B cell (primary cell): ENCODE measurements at regions of chr7 and their contacts with region 1.

Region 1: DNA sequence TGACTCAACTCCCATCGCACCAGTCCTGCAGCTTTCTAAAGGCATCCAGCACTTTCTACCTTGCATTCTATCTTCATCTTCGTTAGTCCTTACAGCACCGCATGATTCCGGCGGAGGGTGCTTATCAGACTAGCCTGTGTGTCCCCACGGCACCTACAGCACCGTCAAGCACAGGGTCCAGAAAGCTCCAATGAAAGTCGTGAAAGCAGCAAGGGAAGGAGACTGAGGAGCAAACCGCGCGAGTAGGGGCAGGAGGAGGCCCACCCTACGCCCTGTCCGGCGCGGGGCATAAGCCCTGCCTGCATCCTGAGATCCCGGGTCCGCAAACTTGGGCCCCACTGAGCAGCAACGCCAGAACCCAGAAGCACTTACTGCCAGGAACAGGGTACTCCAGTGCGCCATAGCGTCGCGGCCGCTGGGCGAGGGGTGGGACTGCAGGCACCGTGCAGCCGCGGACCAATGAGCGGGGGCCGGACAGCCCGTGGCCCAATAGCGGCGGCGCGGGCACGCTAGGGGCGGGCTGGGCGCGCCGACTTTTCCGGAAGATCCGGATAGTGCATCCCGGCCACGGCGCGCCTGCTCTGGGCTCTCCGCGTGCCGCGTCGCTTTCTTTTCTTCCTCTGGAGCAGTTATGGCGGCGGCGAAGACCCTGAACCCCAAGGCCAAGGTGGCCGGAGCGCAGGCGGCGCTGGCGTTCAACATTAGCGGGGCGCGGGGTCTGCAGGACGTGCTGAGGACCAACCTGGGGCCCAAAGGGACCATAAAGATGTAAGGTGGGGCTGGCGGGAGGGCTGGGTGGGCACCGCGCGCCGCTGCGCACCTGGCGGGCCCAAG is 122.1 kb upstream of the VKORC1L1 start:
- DNase-seq: peak; percentile 89
- ATAC-seq: peak; percentile 99
- H3K4me3 ChIP-seq: peak overlapping the region; percentile 43 to 88 (median 75)
- H3K4me3 Mint-ChIP-seq: peak overlapping the region; percentile 97
- H3K27ac ChIP-seq: peak overlapping the region; percentile 41 to 69
- H3K27ac Mint-ChIP-seq: peak overlapping the region; percentile 86
- H3K4me1 ChIP-seq: peaks cover 3 to 15% of the 10 kb centered on the region in 2 donors
- H3K4me1 Mint-ChIP-seq: peaks cover 16% of the 10 kb centered on the region
- H3K27me3 ChIP-seq: no peaks in the 10 kb centered on the region
- H3K27me3 Mint-ChIP-seq: no peaks in the 10 kb centered on the region
- CTCF ChIP-seq: no peak

Region 2: DNA sequence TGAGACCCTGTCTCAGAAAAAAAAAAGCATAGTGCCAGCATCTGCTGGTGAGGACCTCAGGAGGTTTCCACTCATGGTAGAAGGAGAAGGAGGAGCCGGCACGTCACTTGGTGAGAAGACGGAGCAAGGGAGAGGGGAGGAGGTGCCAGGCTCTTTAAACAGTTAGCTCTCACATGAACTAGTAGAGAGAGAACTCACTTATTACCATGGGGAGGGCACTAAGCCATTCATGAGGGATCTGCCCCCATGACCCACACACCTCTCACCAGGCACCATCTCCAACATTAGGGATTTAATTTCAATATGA is 59.2 kb after region 1 on chr7:
- CTCF ChIA-PET with region 1: no interaction called
- POLR2A ChIA-PET with region 1: no interaction called
- intact Hi-C with region 1: no loop called
- DNase-seq: no peak
- ATAC-seq: no peak
- H3K4me3 ChIP-seq: no peak overlapping the region
- H3K4me3 Mint-ChIP-seq: no peak overlapping the region
- H3K27ac ChIP-seq: no peak overlapping the region
- H3K27ac Mint-ChIP-seq: no peak overlapping the region
- H3K4me1 ChIP-seq: peaks cover 0 to 9% of the 10 kb centered on the region in 2 donors
- H3K4me1 Mint-ChIP-seq: peaks cover 9% of the 10 kb centered on the region
- H3K27me3 ChIP-seq: no peaks in the 10 kb centered on the region
- H3K27me3 Mint-ChIP-seq: no peaks in the 10 kb centered on the region
- CTCF ChIP-seq: no peak

Region 3: GRCh38 chr7:65840446-65840845 is 89.7 kb after region 1 on chr7:
- CTCF ChIA-PET with region 1: no interaction called
- POLR2A ChIA-PET with region 1: no interaction called
- intact Hi-C with region 1: no loop called
- DNase-seq: no peak
- ATAC-seq: no peak
- H3K4me3 ChIP-seq: no peak overlapping the region
- H3K4me3 Mint-ChIP-seq: no peak overlapping the region
- H3K27ac ChIP-seq: no peak overlapping the region
- H3K27ac Mint-ChIP-seq: no peak overlapping the region
- H3K4me1 ChIP-seq: no peaks in the 10 kb centered on the region
- H3K4me1 Mint-ChIP-seq: peaks cover under 1% of the 10 kb centered on the region
- H3K27me3 ChIP-seq: no peaks in the 10 kb centered on the region
- H3K27me3 Mint-ChIP-seq: no peaks in the 10 kb centered on the region
- CTCF ChIP-seq: no peak

Region 4: GRCh38 chr7:65872776-65873581 is 122.3 kb after region 1 on chr7 and contains the start of gene VKORC1L1:
- CTCF ChIA-PET with region 1: no interaction called
- POLR2A ChIA-PET with region 1: no interaction called
- intact Hi-C with region 1: loop called (anchors 1 kb)
- DNase-seq: peak; percentile 96
- ATAC-seq: peak; percentile 93
- H3K4me3 ChIP-seq: peak within 1 kb of the TSS in 4 of 5 experiments; percentile 68 to 78 (median 68)
- H3K4me3 Mint-ChIP-seq: peak within 1 kb of the TSS; percentile 87
- H3K27ac ChIP-seq: peak within 1 kb of the TSS; percentile 54 to 71
- H3K27ac Mint-ChIP-seq: peak within 1 kb of the TSS; percentile 68
- H3K4me1 ChIP-seq: peaks cover 5 to 9% of the 10 kb centered on the region in 2 donors
- H3K4me1 Mint-ChIP-seq: peaks cover 8% of the 10 kb centered on the region
- H3K27me3 ChIP-seq: no peaks in the 10 kb centered on the region
- H3K27me3 Mint-ChIP-seq: no peaks in the 10 kb centered on the region
- CTCF ChIP-seq: no peak
- total RNA-seq, gene VKORC1L1: 8.1 and 10.1 TPM in 2 replicates

Region 5: DNA sequence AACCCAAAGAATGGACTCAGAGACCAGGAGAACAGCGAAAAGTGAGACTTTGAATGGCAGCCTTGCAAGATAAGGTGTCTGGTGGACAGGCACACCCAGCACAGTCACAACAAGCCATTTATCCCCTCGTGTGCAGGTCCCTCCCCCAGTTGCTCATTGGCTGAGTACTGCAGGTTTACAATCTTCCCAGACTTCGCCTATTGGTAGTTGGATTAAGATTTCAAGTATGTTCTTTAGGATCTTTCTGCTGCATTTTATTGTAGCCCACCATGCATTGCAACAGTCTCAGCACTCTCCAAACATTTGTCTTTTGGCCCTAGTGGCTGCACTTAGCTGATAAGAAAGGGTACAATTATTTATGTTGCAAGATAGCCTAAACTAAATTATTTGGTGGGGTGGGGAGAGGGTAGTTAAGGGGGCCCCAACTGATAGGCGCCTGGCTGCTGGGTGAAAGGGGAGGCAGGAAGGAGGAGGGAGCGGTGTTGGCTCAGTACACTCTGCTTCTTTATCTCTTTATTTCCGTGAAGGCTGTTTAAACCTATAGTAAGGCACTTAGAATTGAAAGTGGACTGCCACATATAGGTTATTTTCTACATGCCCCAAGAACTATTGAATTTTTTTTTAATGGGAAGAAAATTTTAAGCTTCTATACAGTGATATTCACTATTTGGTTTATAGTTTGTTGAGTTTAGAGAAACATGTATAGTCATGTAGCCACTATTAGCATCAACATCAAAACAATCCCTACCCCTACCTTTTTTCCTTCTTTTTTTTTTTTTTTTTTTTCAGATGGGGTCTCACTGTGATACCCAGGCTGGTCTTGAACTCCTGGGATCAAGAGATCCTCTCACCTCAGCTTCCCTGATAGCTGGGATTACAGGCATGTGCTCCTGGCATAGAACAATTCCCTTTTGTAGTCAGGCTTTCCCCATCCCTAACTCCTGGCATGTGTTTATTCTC is 177.0 kb after region 1 on chr7:
- CTCF ChIA-PET with region 1: no interaction called
- POLR2A ChIA-PET with region 1: no interaction called
- intact Hi-C with region 1: no loop called
- DNase-seq: no peak
- ATAC-seq: no peak
- H3K4me3 ChIP-seq: no peak overlapping the region
- H3K4me3 Mint-ChIP-seq: no peak overlapping the region
- H3K27ac ChIP-seq: no peak overlapping the region
- H3K27ac Mint-ChIP-seq: no peak overlapping the region
- H3K4me1 ChIP-seq: no peaks in the 10 kb centered on the region
- H3K4me1 Mint-ChIP-seq: peaks cover 8% of the 10 kb centered on the region
- H3K27me3 ChIP-seq: no peaks in the 10 kb centered on the region
- H3K27me3 Mint-ChIP-seq: no peaks in the 10 kb centered on the region
- CTCF ChIP-seq: no peak